Calu3 (cell line): ENCODE measurements at regions of chr3 and their contacts with region 1.

Region 1: DNA sequence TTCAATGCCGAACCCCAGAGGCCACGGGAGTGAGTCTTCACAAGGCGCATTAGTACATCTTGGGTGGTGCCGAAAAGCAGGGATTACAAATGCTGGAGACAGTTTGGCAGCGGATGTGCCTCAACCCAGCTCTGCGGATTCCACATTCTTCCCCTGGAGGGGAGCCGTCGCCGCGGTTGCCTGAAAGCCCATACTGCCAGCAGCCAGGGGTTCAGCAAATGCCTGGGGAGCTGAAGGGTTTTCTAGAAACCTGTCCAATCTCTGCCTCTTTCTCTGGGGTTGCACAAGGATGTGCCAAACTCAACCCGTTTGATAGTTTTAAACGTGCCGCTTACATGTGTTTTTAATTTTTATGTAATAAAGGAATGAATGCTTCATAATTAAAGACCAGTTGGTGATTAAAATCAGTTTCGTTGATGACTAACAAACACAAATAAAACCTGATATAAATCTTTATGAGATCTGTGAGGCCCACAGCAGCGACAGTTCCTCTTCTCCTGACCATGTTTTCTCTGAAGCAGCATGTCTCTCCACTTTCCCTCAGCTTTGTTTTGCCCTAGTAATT is 74.6 kb upstream of the LEKR1 start:
- DNase-seq: no peak
- H3K4me3 Mint-ChIP-seq: no peak overlapping the region
- H3K27ac Mint-ChIP-seq: no peak overlapping the region
- H3K4me1 Mint-ChIP-seq: no peaks in the 10 kb centered on the region
- H3K27me3 Mint-ChIP-seq: no peaks in the 10 kb centered on the region
- CTCF ChIP-seq: no peak

Region 2: GRCh38 chr3:156781310-156782230 is 30.0 kb after region 1 on chr3:
- CTCF ChIA-PET with region 1: no interaction called
- intact Hi-C with region 1: no loop called
- DNase-seq: no peak
- H3K4me3 Mint-ChIP-seq: no peak overlapping the region
- H3K27ac Mint-ChIP-seq: no peak overlapping the region
- H3K4me1 Mint-ChIP-seq: peaks cover 24% of the 10 kb centered on the region
- H3K27me3 Mint-ChIP-seq: no peaks in the 10 kb centered on the region
- CTCF ChIP-seq: no peak

Region 3: DNA sequence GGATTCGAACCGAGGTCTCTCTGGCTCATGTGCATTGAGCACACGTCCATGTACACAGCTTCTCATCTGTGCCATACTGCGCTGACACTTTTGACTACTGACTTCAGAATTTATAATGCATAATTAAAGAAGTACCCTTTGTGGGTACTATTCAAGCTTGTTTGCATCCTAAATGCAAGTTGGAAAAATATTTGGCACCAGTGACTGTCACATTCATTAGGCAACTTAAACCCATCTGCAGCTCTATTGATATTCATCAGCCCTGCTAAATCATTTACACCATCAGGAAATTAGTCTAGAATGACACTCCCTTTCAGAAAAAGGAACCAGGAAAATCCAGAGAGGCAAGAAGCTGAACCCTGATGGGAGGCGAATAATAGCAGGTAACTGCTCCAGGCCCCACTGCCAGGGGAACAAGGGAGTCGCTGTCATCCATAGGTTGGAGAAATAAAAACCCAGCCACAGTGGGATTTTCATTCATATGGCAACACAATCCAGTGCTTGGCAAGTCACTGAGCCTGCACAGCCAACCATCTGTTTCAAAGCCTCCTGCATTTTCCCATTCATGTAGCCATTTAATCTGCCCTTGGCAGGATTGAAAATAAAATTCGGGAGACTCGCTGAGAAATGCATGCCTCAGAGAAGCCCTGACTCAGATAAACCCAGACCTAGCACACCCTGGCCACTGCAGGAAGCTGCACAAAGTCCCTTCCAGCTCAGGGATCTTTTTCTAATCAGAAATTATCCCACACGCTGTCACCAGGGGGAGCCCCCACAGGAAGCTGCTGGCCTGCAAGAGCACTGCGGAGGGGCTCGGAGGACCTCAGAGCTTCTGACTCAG is 854.7 kb after region 1 on chr3:
- CTCF ChIA-PET with region 1: interaction called, 10 read pairs
- intact Hi-C with region 1: no loop called
- DNase-seq: peak; percentile 95
- H3K4me3 Mint-ChIP-seq: peak overlapping the region; percentile 26
- H3K27ac Mint-ChIP-seq: no peak overlapping the region
- H3K4me1 Mint-ChIP-seq: peaks cover 11% of the 10 kb centered on the region
- H3K27me3 Mint-ChIP-seq: no peaks in the 10 kb centered on the region
- CTCF ChIP-seq: peak; percentile 97